Naive thymus-derived CD4-positive, alpha-beta T cell (primary cell): ENCODE measurements at regions of chr19 and their contacts with region 1.

Region 1: DNA sequence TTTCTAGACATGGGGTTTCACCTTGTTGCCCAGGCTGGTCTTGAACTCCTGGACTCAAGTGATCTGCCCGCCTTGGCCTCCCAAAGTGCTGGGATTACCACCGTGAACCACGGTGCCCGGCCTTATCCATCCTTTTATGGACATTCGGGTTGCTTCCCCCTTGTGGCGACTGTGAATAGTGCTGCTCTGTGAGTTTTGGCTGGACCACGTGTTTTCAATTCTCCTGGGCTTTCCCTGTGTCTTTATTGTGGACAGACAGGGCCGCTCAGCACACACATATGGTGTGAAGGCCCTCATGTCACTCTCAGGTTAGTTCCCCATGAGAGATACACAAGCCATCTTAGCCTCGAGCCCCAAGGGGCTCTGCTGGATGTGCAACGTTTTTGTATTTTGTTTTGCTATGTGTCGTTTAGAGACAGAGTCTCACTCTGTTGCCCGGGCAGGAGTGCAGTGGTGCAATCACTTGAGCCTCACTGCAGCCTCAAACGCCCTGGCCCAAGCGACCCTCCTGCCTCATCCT is 40.5 kb downstream of the MAU2 start:
- DNase-seq: peak; percentile 40 to 70 (median 57)
- ATAC-seq: peak; percentile 79
- H3K4me3 ChIP-seq: no peak overlapping the region
- H3K4me3 Mint-ChIP-seq: peak overlapping the region in 8 of 10 donors; percentile 7 to 73 (median 54)
- H3K27ac ChIP-seq: no peak overlapping the region
- H3K27ac Mint-ChIP-seq: peak overlapping the region in 8 of 9 donors; percentile 5 to 78 (median 68)
- H3K4me1 ChIP-seq: peaks cover 15 to 21% of the 10 kb centered on the region in 2 donors
- H3K4me1 Mint-ChIP-seq: peaks cover 18 to 51% (median 35%) of the 10 kb centered on the region in 7 donors
- H3K27me3 ChIP-seq: no peaks in the 10 kb centered on the region
- H3K27me3 Mint-ChIP-seq: no peaks in the 10 kb centered on the region

Region 2: GRCh38 chr19:19145684-19146608 is 215.2 kb before region 1 on chr19:
- CTCF ChIA-PET with region 1: no interaction called
- POLR2A ChIA-PET with region 1: interaction called, 3 read pairs
- intact Hi-C with region 1: loop called in 1 of 2 experiments (anchors 2 kb)
- DNase-seq: peak; percentile 68 to 93 (median 80)
- ATAC-seq: peak; percentile 96
- H3K4me3 ChIP-seq: no peak overlapping the region
- H3K4me3 Mint-ChIP-seq: no peak overlapping the region
- H3K27ac ChIP-seq: no peak overlapping the region
- H3K27ac Mint-ChIP-seq: no peak overlapping the region
- H3K4me1 ChIP-seq: no peaks in the 10 kb centered on the region
- H3K4me1 Mint-ChIP-seq: no peaks in the 10 kb centered on the region
- H3K27me3 ChIP-seq: no peaks in the 10 kb centered on the region
- H3K27me3 Mint-ChIP-seq: no peaks in the 10 kb centered on the region

Region 3: GRCh38 chr19:19372656-19373416 is 11.7 kb after region 1 on chr19:
- CTCF ChIA-PET with region 1: no interaction called
- POLR2A ChIA-PET with region 1: interaction called, 10 read pairs
- intact Hi-C with region 1: no loop called
- DNase-seq: peak in 3 of 9 donors; percentile 14 to 27 (median 23)
- ATAC-seq: peak; percentile 97
- H3K4me3 ChIP-seq: peak overlapping the region; percentile 4
- H3K4me3 Mint-ChIP-seq: peak overlapping the region in 9 of 10 donors; percentile 55 to 72 (median 64)
- H3K27ac ChIP-seq: peak overlapping the region; percentile 41
- H3K27ac Mint-ChIP-seq: peak overlapping the region; percentile 68 to 91 (median 84)
- H3K4me1 ChIP-seq: peaks cover 5 to 12% of the 10 kb centered on the region in 2 donors
- H3K4me1 Mint-ChIP-seq: peaks cover 6 to 12% (median 8%) of the 10 kb centered on the region in 7 donors
- H3K27me3 ChIP-seq: no peaks in the 10 kb centered on the region
- H3K27me3 Mint-ChIP-seq: no peaks in the 10 kb centered on the region